Activated CD4-positive, alpha-beta memory T cell treated with anti-CD3 and anti-CD28 coated beads for 36 hours (primary cell): ENCODE measurements at regions of chr1 and their contacts with region 1.

Region 1: DNA sequence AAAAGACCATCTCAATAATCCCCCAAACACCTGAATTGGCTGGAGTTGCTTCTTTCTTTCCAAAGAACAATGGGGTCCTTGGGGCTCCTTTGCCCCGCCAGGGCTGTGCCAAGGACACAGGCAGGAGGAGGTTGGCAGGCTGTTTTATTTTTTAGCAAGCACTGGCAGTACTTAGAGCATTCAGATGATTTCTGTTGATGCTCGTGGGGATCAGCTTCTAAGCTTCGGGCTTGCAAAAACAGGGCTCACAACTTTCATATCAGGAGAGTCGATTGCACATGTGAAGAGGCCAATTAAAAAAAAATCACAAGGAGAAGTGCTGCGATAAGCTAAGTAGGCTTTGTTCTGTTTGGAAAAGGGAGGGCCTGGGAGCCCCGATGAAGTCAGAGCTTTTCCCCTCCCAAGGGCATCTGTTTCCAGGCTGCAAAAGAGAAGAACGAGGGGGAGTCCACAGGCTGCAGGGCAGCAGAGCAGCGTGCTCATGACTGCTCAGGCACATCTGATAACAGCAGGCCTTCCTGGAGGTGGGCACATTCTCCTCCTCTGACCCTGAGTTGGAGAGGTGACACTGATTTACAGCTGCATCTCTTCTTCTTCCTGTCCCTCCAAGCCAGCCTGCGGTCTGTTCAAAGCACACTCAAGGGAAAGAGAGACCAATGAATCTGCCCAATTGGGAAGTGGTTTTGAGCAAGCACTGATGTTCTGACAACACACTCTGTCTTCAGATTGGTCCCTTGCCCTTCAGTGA is 27.3 kb upstream of the BCAR3 start:
- DNase-seq: peak; percentile 31
- H3K4me3 Mint-ChIP-seq: no peak overlapping the region
- H3K27ac Mint-ChIP-seq: no peak overlapping the region
- H3K4me1 Mint-ChIP-seq: peaks cover 40% of the 10 kb centered on the region
- H3K27me3 Mint-ChIP-seq: peaks cover 14% of the 10 kb centered on the region

Region 2: GRCh38 chr1:93680757-93681550 is 28.0 kb before region 1 on chr1:
- CTCF ChIA-PET with region 1: no interaction called
- POLR2A ChIA-PET with region 1: no interaction called
- intact Hi-C with region 1: loop called (anchors 2 kb)
- DNase-seq: peak; percentile 70
- H3K4me3 Mint-ChIP-seq: peak overlapping the region; percentile 78
- H3K27ac Mint-ChIP-seq: no peak overlapping the region
- H3K4me1 Mint-ChIP-seq: peaks cover 10% of the 10 kb centered on the region
- H3K27me3 Mint-ChIP-seq: peaks cover 48% of the 10 kb centered on the region

Region 3: DNA sequence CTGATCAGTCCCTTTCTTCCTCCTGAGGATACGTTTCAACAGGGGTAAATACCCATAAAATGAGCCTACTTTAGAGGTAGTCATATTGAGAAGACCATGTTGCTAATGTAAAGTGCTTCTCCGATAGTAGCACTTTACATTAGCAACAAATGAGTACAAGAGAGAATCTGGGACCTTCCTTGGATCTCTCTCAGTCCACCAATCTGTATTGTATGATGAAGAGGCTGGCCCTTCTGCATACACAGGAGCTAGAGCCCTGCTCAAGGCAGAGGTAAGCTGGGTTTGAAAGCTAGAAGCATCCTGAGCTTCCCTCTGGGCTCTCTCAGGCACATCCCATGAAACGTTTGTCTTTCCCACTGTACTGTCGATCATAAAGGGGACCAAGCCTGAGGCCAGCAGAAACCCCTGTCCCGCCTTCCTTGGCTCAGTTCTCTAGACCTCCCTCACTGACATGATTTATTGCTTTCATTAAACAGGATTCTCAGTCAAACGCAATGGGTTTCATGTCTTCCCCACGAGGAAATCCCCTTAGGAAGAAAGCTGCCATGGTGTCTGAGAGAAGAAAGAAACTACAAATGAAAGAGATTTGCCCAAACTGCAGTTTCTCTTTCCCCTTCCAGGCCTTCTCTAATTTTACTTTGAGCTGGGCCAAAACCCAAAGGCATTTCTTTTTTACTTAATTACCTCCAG is 35.5 kb after region 1 on chr1:
- CTCF ChIA-PET with region 1: no interaction called
- POLR2A ChIA-PET with region 1: no interaction called
- intact Hi-C with region 1: loop called (anchors 2 kb)
- DNase-seq: no peak
- H3K4me3 Mint-ChIP-seq: no peak overlapping the region
- H3K27ac Mint-ChIP-seq: no peak overlapping the region
- H3K4me1 Mint-ChIP-seq: peaks cover 12% of the 10 kb centered on the region
- H3K27me3 Mint-ChIP-seq: peaks cover 8% of the 10 kb centered on the region

Region 4: DNA sequence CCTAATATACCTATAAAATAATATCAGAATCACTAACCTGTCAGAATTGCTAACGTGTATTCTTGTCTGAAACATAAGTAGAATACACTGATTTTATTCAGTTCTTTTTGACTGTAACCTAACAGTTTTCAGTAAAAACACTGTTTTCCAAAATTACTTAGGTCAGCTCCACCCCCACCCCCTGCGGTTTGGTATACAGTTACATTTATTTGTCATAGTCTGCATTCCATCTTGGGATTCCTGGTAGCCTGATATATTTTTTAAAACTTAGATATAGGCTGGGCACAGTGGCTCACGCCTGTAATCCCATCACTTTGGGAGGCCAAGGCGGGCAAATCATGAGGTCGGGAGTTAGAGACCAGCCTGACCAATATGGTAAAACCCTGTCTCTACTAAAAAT is 689.4 kb after region 1 on chr1:
- CTCF ChIA-PET with region 1: no interaction called
- POLR2A ChIA-PET with region 1: no interaction called
- intact Hi-C with region 1: no loop called
- DNase-seq: no peak
- H3K4me3 Mint-ChIP-seq: no peak overlapping the region
- H3K27ac Mint-ChIP-seq: no peak overlapping the region
- H3K4me1 Mint-ChIP-seq: no peaks in the 10 kb centered on the region
- H3K27me3 Mint-ChIP-seq: peaks cover 14% of the 10 kb centered on the region